ENCODE measurements at regions of chr21 and their contacts with region 1.

Region 1: DNA sequence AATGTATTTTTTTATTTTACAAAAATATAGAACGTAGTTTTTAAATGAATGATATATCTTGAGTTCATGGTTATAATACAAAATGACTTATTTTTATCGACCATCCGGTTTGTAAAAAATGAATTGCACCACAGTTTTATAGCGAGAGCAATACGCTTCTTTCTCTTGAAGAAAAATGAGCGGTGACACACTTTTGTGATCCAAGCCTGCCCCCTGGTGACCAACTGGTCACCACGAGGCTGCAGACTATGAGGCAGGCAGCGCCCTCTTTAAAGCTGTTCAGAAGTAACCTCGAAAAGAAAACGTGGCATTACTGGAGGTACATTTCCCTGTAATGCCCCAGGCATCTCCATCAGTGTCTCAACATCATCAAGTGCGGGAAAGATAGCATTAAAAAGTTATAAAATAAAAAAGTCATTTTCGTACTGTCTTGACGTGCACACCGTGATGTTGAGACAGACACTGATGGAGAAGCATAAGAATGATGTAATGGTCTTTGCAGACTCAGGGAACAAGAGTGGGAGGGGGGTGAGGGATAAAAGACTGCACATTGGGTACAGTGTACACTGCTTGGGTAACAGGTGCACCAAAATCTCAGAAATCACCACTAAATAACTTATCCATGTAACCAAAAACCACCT is 734.2 kb upstream of the ADAMTS5 start:
- DNase-seq: peak; percentile 71 to 94 (median 84)
- H3K4me3 ChIP-seq: no peak overlapping the region
- H3K27ac ChIP-seq: no peak overlapping the region
- H3K4me1 ChIP-seq: no peaks in the 10 kb centered on the region
- H3K27me3 ChIP-seq: no peaks in the 10 kb centered on the region
- CTCF ChIP-seq: peak; percentile 68 to 91 (median 80)
- POLR2A ChIP-seq: no peak

Region 2: GRCh38 chr21:26842976-26843932 is 857.8 kb before region 1 on chr21:
- intact Hi-C with region 1: loop called in 1 of 2 experiments (anchors 2 kb)
- DNase-seq: peak; percentile 88 to 96 (median 91)
- H3K4me3 ChIP-seq: peak overlapping the region in 2 of 4 donors; percentile 19 to 54
- H3K27ac ChIP-seq: peak overlapping the region in 4 of 5 donors; percentile 35 to 94 (median 80)
- H3K4me1 ChIP-seq: peaks cover 4 to 22% of the 10 kb centered on the region in 2 donors
- H3K27me3 ChIP-seq: peaks cover 15% of the 10 kb centered on the region
- CTCF ChIP-seq: peak in 1 of 6 experiments; percentile 32
- POLR2A ChIP-seq: peak in 1 of 2 donors; percentile 3

Region 3: GRCh38 chr21:28745131-28746016 is 1044.3 kb after region 1 on chr21:
- intact Hi-C with region 1: loop called in 1 of 2 experiments (anchors 10 kb)
- DNase-seq: peak; percentile 67 to 90 (median 72)
- H3K4me3 ChIP-seq: peak overlapping the region in 2 of 4 donors; percentile 34 to 58
- H3K27ac ChIP-seq: peak overlapping the region in 2 of 5 donors; percentile 35 to 39
- H3K4me1 ChIP-seq: peaks cover 0 to 8% of the 10 kb centered on the region in 2 donors
- H3K27me3 ChIP-seq: no peaks in the 10 kb centered on the region
- CTCF ChIP-seq: peak; percentile 83 to 100 (median 98)
- POLR2A ChIP-seq: no peak

Measured in adrenal gland (tissue), 19 donors.